KBM-7 (cell line): ENCODE measurements at regions of chr15 and their contacts with region 1.

Region 1: GRCh38 chr15:48861813-48862431 is 16.0 kb upstream of the EID1 start:
- DNase-seq: peak; percentile 57

Region 2: DNA sequence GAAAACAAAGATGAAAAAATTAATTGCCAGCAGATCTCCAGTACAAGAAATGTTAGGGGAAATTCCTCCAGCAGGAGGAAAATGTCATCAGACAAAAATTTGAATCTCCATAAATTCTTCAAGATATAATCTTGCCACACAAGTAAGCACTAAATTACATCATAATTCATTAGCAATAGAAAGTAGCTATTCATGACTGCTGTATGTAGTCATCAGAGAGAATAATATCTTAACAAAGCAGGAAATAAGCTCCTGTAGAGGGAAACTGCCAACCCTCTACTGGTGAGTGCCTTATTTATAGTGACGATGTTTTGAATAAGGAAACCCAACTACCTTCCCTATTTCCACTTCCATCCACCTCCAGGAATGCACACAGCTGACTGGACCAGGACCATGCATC is 1304.3 kb after region 1 on chr15:
- in situ Hi-C with region 1: loop called (anchors 25 kb)
- DNase-seq: no peak